Heart right ventricle (tissue), 16 donors: ENCODE measurements at regions of chr5 and their contacts with region 1.

Region 1: DNA sequence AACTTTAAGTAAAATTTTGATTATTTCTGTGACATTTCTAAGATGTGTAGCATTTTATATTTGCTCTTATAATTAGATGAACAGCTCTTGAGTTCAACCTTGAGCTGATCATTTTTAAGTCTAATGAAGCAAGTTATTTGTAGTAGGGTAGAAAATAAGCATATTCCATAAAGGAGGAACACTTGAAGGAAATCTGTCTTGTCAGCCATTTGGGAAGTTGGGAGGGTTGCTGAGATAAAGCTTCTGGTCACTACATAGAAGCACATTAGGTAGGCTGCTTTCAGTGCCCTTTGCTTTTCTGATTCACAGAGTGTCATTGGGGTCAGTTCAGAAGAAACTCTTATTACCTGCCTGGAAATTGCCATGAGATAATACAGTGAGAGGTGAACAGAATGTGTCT is 44.1 kb downstream of the SEC24A start:
- DNase-seq: no peak
- ATAC-seq: no peak
- H3K4me3 ChIP-seq: no peak overlapping the region
- H3K27ac ChIP-seq: no peak overlapping the region
- H3K4me1 ChIP-seq: no peaks in the 10 kb centered on the region
- H3K27me3 ChIP-seq: no peaks in the 10 kb centered on the region
- CTCF ChIP-seq: no peak

Region 2: DNA sequence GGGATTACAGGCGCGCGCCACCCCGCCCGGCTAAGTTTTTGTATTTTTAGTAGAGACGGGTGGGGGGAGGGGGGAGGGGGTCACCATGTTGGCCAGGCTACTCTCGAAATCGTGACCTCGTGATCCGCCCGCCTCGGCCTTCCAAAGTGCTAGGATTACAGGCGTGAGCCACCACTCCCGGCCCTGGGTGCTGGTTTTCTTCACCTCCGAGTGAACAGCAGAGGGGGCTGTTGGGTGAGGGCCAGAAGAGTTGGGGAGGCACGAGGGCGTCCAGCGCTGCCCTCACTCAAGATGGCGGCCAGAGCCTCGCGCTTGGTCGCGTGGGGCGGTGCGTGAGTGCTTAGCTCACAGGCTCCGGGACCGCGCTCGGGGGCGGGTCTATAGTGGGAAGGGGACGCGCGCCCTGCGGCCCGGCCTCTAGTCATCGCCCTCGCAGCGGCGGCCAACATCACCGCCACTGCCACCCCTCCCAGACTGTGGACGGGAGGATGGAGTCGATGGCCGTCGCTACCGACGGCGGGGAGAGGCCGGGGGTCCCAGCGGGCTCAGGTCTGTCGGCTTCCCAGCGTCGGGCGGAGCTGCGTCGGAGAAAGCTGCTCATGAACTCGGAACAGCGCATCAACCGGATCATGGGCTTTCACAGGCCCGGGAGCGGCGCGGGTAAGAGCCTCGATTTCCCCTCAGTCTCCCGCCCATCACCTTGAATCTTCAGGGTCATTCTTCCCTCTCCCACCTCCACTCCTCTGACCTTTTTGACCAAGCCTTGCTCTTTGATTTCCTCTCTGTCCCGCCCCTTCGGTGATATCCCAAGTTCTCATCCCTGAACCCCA is 45.6 kb after region 1 on chr5 and contains the start of gene CAMLG:
- intact Hi-C with region 1: no loop called
- DNase-seq: peak; percentile 98
- ATAC-seq: peak; percentile 99 to 100 (median 100)
- H3K4me3 ChIP-seq: peak within 1 kb of the TSS; percentile 64 to 95 (median 80)
- H3K27ac ChIP-seq: peak within 1 kb of the TSS; percentile 70 to 96 (median 90)
- H3K4me1 ChIP-seq: peaks cover 0 to 38% (median 15%) of the 10 kb centered on the region in 9 donors
- H3K27me3 ChIP-seq: no peaks in the 10 kb centered on the region
- CTCF ChIP-seq: peak; percentile 18 to 78 (median 66)
- total RNA-seq, gene CAMLG: 14.6 to 22.1 (median 18.1) TPM

Region 3: DNA sequence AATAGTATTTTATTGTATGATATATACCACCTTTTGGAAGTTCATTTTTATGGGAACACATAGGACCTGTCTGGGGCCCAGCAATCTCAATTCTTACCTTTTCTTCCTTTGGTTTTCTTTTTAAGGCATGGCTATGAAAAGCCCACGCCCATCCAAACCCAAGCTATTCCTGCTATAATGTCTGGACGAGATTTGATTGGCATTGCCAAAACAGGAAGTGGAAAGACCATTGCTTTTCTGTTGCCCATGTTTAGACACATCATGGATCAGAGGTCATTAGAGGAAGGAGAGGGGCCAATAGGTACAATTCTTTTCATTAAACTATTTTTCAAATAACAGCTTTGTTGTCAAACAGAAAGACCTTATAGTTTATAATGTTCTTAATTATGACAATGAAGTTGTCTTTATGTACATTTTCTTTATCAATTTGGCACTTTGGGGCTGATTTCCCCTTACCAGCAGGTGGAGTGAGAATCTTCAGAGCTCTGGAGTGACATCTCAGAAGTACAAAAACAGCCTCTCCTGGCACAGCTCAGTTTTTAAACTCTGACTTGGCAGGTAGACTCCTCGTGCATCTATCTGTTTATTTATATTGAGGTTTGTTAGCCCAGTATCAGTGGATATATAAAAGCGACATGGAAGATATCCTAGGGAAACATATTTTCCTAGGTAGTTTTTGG is 91.7 kb after region 1 on chr5:
- intact Hi-C with region 1: loop called in 2 of 10 experiments (anchors 10 kb)
- DNase-seq: no peak
- ATAC-seq: no peak
- H3K4me3 ChIP-seq: no peak overlapping the region
- H3K27ac ChIP-seq: no peak overlapping the region
- H3K4me1 ChIP-seq: no peaks in the 10 kb centered on the region
- H3K27me3 ChIP-seq: no peaks in the 10 kb centered on the region
- CTCF ChIP-seq: peak in 2 of 9 donors; percentile 6 to 11

Region 4: DNA sequence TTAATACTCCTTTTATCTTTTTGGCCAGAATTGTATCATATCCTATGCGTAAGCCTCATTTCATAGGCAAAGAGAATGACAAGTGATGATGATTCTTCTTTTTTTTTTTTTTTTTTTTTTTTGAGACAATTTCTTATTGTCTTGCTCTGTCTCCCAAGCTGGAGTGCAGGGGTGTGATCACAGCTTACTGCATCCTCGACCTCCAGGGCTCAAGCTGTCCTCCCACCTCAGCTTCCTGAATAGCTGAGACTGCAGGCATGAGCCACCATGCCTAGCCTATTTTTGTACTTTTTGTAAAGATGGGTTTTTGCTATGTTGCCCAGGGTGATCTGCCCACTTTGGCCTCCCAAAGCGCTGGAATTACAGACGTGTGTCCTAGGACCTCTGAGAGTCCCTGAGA is 111.1 kb after region 1 on chr5:
- intact Hi-C with region 1: loop called in 1 of 10 experiments (anchors 10 kb)
- DNase-seq: no peak
- ATAC-seq: no peak
- H3K4me3 ChIP-seq: no peak overlapping the region
- H3K27ac ChIP-seq: no peak overlapping the region
- H3K4me1 ChIP-seq: no peaks in the 10 kb centered on the region
- H3K27me3 ChIP-seq: no peaks in the 10 kb centered on the region
- CTCF ChIP-seq: no peak